ENCODE measurements at regions of chr16 and their contacts with region 1.

Region 1: GRCh38 chr16:27515874-27516353 is 33.8 kb downstream of the GTF3C1 start:
- DNase-seq: no peak
- H3K4me3 ChIP-seq: no peak overlapping the region
- H3K27me3 ChIP-seq: no peaks in the 10 kb centered on the region
- CTCF ChIP-seq: peak; percentile 64

Region 2: GRCh38 chr16:27499659-27500055 is 16.3 kb before region 1 on chr16:
- CTCF ChIA-PET with region 1: interaction called, 14 read pairs
- POLR2A ChIA-PET with region 1: no interaction called
- DNase-seq: no peak
- H3K4me3 ChIP-seq: no peak overlapping the region
- H3K27me3 ChIP-seq: no peaks in the 10 kb centered on the region
- CTCF ChIP-seq: no peak